ENCODE measurements at regions of chr16 and their contacts with region 1.

Region 1: DNA sequence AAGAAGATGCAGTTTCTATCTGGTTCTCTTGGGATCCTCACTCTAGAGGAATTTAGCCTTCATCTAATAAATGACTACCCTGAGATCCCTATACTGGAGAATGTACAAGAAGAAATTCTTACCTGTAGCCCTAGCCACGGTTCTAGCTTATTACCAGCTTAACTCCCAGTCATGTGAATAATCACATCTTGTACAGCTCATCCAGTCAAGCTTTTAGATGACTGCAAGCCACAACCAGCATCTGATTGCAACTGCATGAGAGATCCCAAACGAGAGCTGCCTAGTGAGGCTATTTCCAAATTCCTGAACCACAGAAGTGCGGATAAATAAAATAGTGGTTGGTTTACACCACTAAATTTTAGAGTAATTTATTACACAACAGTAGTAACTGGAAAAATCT is 196.0 kb upstream of the CPHXL start:
- DNase-seq: no peak
- H3K4me3 ChIP-seq: no peak overlapping the region
- H3K27ac ChIP-seq: no peak overlapping the region
- H3K4me1 ChIP-seq: no peaks in the 10 kb centered on the region
- H3K27me3 ChIP-seq: peaks cover 28% of the 10 kb centered on the region; the same call in 1 of the 2 replicates
- CTCF ChIP-seq: no peak

Region 2: GRCh38 chr16:75647492-75648264 is 274.6 kb before region 1 on chr16 and contains the starts of genes KARS1 and TERF2IP:
- CTCF ChIA-PET with region 1: no interaction called
- POLR2A ChIA-PET with region 1: interaction called, 18 read pairs
- intact Hi-C with region 1: no loop called
- DNase-seq: peak; percentile 83 to 91
- H3K4me3 ChIP-seq: peak within 1 kb of the TSS; percentile 98
- H3K27ac ChIP-seq: peak within 1 kb of the TSS; percentile 67
- H3K4me1 ChIP-seq: peaks cover 27% of the 10 kb centered on the region
- H3K27me3 ChIP-seq: no peaks in the 10 kb centered on the region
- CTCF ChIP-seq: no peak
- total RNA-seq, gene KARS1: 101 and 132 TPM in 2 replicates
- total RNA-seq, gene TERF2IP: 16.9 and 19.3 TPM in 2 replicates

Region 3: DNA sequence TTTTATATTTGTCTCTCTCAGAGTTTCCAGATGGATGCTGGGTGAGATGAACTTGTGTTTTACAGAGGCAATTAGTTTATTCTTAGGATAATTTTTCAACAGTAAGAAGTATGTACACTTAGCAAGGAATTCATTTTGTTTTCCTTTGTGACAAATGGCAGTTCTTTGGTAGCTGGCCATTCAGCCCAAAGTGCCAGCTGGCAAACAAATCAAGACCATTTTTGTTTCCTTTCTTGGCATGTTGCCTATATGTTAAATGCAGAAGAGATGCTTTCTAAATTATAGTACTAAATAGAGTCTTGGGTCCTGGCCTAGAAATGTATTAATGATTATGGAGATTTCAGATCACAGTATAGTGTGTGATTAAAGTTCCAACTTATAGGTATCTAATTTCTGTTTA is 692.0 kb after region 1 on chr16:
- CTCF ChIA-PET with region 1: no interaction called
- POLR2A ChIA-PET with region 1: no interaction called
- intact Hi-C with region 1: no loop called
- DNase-seq: no peak
- H3K4me3 ChIP-seq: no peak overlapping the region
- H3K27ac ChIP-seq: no peak overlapping the region
- H3K4me1 ChIP-seq: no peaks in the 10 kb centered on the region
- H3K27me3 ChIP-seq: peaks cover 8% of the 10 kb centered on the region; the same call in 1 of the 2 replicates
- CTCF ChIP-seq: no peak

Measured in PC-9 (cell line).